Dendritic cell treated with granulocyte-macrophage colony-stimulating factor and Interleukin-4, amounts not matched to agents 40 ng/mL and 50 ng/mL, for 4 days (primary cell): ENCODE measurements at regions of chr11 and their contacts with region 1.

Region 1: GRCh38 chr11:35082321-35083182 is 56.4 kb upstream of the CD44 start:
- H3K4me3 Mint-ChIP-seq: peak overlapping the region; percentile 71
- H3K27ac Mint-ChIP-seq: peak overlapping the region; percentile 99
- H3K4me1 Mint-ChIP-seq: peaks cover 79% of the 10 kb centered on the region
- H3K27me3 Mint-ChIP-seq: no peaks in the 10 kb centered on the region

Region 2: GRCh38 chr11:34468209-34468841 is 614.2 kb before region 1 on chr11:
- intact Hi-C with region 1: no loop called
- H3K4me3 Mint-ChIP-seq: no peak overlapping the region
- H3K27ac Mint-ChIP-seq: no peak overlapping the region
- H3K4me1 Mint-ChIP-seq: peaks cover 10% of the 10 kb centered on the region
- H3K27me3 Mint-ChIP-seq: no peaks in the 10 kb centered on the region

Region 3: DNA sequence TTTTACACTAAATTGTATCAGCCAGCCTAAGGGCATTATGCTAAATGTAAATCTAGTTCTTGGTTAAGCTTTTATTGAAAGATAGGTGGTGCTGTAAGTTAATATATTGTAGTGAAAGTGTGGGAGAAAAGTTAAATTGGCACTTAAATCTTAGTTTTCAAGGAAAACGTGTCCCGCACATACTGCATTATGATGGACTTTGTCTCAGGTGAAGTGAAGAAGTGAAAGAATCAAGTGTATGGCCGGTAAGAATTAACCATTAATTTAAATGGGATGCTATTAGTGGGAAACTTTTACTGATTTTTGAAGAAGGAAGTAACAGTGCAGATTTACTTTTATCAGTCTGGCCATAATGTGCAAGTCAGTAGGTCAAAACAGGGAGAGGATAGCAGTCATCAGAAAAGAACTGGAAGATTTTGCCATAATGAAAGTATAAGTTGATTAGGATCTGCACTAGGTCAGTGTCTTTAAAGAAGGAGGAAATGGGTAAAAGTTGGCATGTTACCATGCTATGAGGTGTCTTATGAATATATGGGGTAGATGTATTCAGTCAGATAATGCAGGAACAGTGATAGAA is 84.5 kb before region 1 on chr11:
- intact Hi-C with region 1: loop called (anchors 2 kb)
- H3K4me3 Mint-ChIP-seq: peak overlapping the region; percentile 55
- H3K27ac Mint-ChIP-seq: peak overlapping the region; percentile 79
- H3K4me1 Mint-ChIP-seq: peaks cover 20% of the 10 kb centered on the region
- H3K27me3 Mint-ChIP-seq: no peaks in the 10 kb centered on the region

Region 4: DNA sequence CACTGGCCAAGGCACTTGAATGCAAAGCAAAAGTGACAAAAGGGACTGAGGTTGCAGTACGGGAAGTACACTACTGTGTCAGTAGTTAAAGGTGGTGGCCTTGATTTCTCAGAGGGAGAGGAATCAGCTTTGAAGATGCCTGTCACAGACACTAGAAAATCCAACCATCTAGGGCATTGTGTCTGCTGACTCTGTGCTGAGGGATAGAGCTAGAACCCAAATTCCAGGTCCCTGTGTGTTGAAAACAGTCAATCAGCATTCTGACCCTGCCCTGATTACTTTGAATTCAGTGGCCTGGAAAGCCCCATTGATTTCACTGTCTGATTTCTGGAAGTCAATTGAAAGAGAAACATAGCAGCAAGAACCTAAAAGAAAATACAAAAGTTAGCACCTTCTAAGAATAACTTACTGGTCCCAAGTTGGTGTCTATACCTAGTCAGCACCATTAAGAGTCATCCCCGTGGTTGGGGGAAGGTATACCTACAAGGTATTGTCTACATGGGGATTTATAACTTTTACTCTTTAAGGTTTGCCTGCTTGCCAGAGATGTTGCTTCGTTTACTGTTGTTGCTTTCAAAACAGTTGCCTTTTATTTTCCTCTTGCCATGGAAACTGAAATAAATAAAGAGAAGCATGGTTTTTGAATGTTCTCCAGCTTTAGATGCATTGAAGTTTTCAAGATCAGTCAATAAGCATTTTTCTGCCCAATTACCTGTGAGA is 68.9 kb before region 1 on chr11:
- intact Hi-C with region 1: no loop called
- H3K4me3 Mint-ChIP-seq: no peak overlapping the region
- H3K27ac Mint-ChIP-seq: peak overlapping the region; percentile 62
- H3K4me1 Mint-ChIP-seq: peaks cover 28% of the 10 kb centered on the region
- H3K27me3 Mint-ChIP-seq: no peaks in the 10 kb centered on the region

Region 5: DNA sequence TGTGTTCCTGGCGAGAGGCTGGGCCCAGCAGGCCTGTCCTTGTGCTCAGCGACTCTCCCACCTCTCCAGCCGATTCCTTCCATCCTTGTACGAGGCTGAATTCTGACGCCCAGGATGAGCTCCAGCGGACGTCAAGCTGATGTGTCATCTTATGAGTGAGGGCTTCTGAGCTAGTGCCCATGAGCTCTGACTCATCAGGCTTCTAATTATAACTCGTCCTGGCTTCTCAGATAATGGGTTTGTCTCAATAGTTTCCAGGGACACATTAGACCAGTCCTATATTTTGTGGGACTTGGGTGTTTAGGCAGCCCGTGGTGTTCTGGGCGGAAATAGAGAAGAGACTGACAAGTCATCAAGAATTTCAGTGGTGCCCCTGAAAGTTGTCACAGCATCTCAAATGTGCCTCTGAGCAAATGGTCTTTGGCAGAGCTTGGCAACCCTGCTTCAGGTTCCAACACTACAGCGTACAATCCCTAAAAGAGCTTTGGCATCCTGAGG is 51.8 kb before region 1 on chr11:
- intact Hi-C with region 1: loop called (anchors 2 kb)
- H3K4me3 Mint-ChIP-seq: peak overlapping the region; percentile 51
- H3K27ac Mint-ChIP-seq: peak overlapping the region; percentile 94
- H3K4me1 Mint-ChIP-seq: peaks cover 78% of the 10 kb centered on the region
- H3K27me3 Mint-ChIP-seq: no peaks in the 10 kb centered on the region

Region 6: GRCh38 chr11:35138943-35139721 is 56.6 kb after region 1 on chr11 and contains the start of gene CD44:
- intact Hi-C with region 1: loop called (anchors 2 kb)
- H3K4me3 Mint-ChIP-seq: peak within 1 kb of the TSS; percentile 87
- H3K27ac Mint-ChIP-seq: peak within 1 kb of the TSS; percentile 91
- H3K4me1 Mint-ChIP-seq: peaks cover 53% of the 10 kb centered on the region
- H3K27me3 Mint-ChIP-seq: no peaks in the 10 kb centered on the region

Region 7: DNA sequence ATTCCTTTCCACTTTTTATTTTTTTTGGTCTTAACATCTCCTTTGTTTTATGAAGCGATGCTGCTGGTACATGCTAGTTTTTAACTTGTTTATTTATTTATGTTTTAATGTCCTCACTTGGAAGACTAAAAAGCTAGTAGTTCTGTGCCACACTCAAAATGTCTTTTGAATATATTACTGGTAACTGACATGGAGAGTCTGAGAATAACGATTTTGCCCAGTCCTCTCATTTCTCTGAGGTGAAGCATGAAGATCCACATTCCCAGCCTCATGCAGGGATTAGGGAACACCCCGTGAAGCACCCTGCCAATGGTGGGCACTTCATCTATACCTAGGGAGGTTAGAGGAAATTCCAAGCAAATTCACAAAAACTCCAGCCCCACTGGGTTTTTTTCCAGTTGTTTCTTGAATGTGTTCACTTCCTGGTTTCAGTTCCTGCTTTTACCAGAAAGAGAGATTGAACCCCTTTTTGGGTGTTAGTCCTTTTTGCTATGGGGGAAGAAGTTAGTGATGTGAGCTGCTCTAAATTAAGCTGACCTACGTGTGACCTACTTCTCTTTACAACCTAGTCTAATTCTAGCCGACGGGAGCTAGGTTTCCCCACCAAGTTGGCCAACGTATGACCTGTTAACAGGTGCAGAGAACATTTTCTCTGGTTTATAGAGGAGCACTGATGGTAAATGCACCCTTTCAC is 230.7 kb after region 1 on chr11:
- intact Hi-C with region 1: loop called (anchors 10 kb)
- H3K4me3 Mint-ChIP-seq: no peak overlapping the region
- H3K27ac Mint-ChIP-seq: peak overlapping the region; percentile 72
- H3K4me1 Mint-ChIP-seq: peaks cover 69% of the 10 kb centered on the region
- H3K27me3 Mint-ChIP-seq: no peaks in the 10 kb centered on the region

Region 8: DNA sequence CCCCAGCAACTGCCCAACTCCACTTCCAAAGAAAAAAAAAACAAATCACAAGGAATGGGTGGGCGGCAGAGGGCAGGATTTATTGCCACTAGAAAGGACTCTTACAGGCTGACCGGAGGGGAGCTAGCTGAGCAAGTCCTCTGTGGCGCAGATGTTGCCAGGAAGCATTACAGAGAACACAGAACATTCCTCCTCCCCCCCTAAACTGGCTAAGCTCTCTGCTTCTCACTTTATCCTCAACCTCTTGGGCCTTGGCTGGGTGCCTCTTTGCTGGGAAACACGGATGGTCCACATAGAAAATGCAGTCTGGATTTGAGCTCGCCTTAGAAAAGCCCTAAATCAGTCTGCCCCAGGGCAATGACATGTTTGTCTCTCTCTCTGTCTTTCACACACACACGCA is 523.2 kb after region 1 on chr11:
- intact Hi-C with region 1: no loop called
- H3K4me3 Mint-ChIP-seq: no peak overlapping the region
- H3K27ac Mint-ChIP-seq: no peak overlapping the region
- H3K4me1 Mint-ChIP-seq: no peaks in the 10 kb centered on the region
- H3K27me3 Mint-ChIP-seq: peaks cover 44% of the 10 kb centered on the region